K562 (cell line): ENCODE measurements at regions of chr4 and their contacts with region 1.

Region 1: DNA sequence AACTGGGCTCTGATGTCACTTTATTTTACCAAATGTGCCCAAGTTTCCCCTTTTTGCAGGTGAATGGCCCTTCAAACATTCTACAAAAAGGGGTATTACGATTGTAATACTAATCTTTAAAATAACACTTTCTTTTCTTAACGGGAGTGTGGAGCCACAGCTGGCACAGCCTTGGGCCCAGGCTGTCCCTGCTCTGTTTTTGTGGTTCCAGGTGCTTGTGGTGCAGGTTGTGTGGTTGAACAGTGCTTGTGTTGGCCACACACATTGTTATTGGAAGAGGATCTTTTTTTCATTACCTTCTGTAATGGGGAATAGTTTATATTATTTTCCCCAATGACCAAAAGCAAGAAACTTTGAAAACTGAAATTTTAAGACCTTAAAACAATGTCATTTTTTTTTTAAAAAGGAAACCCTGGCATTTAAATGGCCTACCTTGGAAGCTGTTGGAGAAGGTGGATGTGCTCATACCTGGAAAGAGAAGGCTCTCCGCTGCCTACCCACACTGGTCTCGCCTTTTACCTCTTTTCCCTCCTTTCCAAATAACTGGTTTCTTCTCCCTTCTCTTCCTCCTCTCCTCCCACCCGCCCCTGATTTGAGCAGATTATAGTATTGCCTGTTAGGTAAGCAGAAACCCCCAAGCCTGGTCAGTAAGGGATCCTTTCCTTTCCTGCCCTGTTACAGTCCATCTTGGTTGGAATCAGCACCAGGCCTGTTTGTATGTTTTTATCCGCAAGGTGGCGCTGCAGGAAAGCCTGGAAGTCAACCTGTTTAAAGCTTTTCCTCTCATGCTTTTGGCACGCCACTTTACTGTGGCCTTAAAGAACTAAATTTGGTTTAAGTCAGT is 28.6 kb downstream of the HADH start:
- DNase-seq: peak; percentile 71 to 85 (median 80)
- ATAC-seq: peak; percentile 97
- H3K4me3 ChIP-seq: no peak overlapping the region
- H3K27ac ChIP-seq: no peak overlapping the region
- H3K4me1 ChIP-seq: peaks cover 0 to 4% of the 10 kb centered on the region in 2 experiments; a peak in 3 of 5 replicates
- H3K27me3 ChIP-seq: no peaks in the 10 kb centered on the region
- CTCF ChIP-seq: peak; percentile 82 to 85 (median 84)
- EP300 ChIP-seq: no peak
- POLR2A ChIP-seq: no peak
- RAD21 ChIP-seq: peak; percentile 72 to 82

Region 2: GRCh38 chr4:107606700-107607099 is 411.6 kb before region 1 on chr4:
- CTCF ChIA-PET with region 1: no interaction called
- POLR2A ChIA-PET with region 1: no interaction called
- in situ Hi-C with region 1: no loop called
- intact Hi-C with region 1: no loop called
- DNase-seq: no peak
- ATAC-seq: no peak
- H3K4me3 ChIP-seq: no peak overlapping the region
- H3K27ac ChIP-seq: no peak overlapping the region
- H3K4me1 ChIP-seq: no peaks in the 10 kb centered on the region
- H3K27me3 ChIP-seq: no peaks in the 10 kb centered on the region
- CTCF ChIP-seq: no peak
- EP300 ChIP-seq: no peak
- POLR2A ChIP-seq: no peak
- RAD21 ChIP-seq: no peak

Region 3: GRCh38 chr4:107922486-107923483 is 95.5 kb before region 1 on chr4:
- CTCF ChIA-PET with region 1: no interaction called
- POLR2A ChIA-PET with region 1: no interaction called
- in situ Hi-C with region 1: no loop called
- intact Hi-C with region 1: no loop called
- DNase-seq: no peak
- ATAC-seq: no peak
- H3K4me3 ChIP-seq: no peak overlapping the region
- H3K27ac ChIP-seq: no peak overlapping the region
- H3K4me1 ChIP-seq: no peaks in the 10 kb centered on the region
- H3K27me3 ChIP-seq: no peaks in the 10 kb centered on the region; a peak in 1 of 5 replicates
- CTCF ChIP-seq: no peak
- EP300 ChIP-seq: no peak
- POLR2A ChIP-seq: no peak
- RAD21 ChIP-seq: no peak

Region 4: GRCh38 chr4:108109997-108110416 is 91.7 kb after region 1 on chr4:
- CTCF ChIA-PET with region 1: no interaction called
- POLR2A ChIA-PET with region 1: no interaction called
- in situ Hi-C with region 1: no loop called
- intact Hi-C with region 1: no loop called
- DNase-seq: no peak
- ATAC-seq: no peak
- H3K4me3 ChIP-seq: no peak overlapping the region
- H3K27ac ChIP-seq: no peak overlapping the region
- H3K4me1 ChIP-seq: peaks cover 4 to 44% of the 10 kb centered on the region in 2 experiments; a peak in 4 of 5 replicates
- H3K27me3 ChIP-seq: no peaks in the 10 kb centered on the region
- CTCF ChIP-seq: no peak
- EP300 ChIP-seq: no peak
- POLR2A ChIP-seq: no peak
- RAD21 ChIP-seq: no peak

Region 5: GRCh38 chr4:108181704-108182103 is 163.4 kb after region 1 on chr4:
- CTCF ChIA-PET with region 1: no interaction called
- POLR2A ChIA-PET with region 1: no interaction called
- in situ Hi-C with region 1: no loop called
- intact Hi-C with region 1: loop called (anchors 5 kb)
- DNase-seq: peak; percentile 31 to 52 (median 36)
- ATAC-seq: peak; percentile 98
- H3K4me3 ChIP-seq: no peak overlapping the region
- H3K27ac ChIP-seq: no peak overlapping the region
- H3K4me1 ChIP-seq: no peaks in the 10 kb centered on the region
- H3K27me3 ChIP-seq: no peaks in the 10 kb centered on the region
- CTCF ChIP-seq: peak; percentile 44 to 76 (median 64); a peak in 4 of 6 replicates
- EP300 ChIP-seq: no peak
- POLR2A ChIP-seq: no peak
- RAD21 ChIP-seq: peak; percentile 25 to 60; a peak in 3 of 4 replicates

Region 6: GRCh38 chr4:108512615-108513505 is 494.6 kb after region 1 on chr4:
- CTCF ChIA-PET with region 1: no interaction called
- POLR2A ChIA-PET with region 1: no interaction called
- in situ Hi-C with region 1: no loop called
- intact Hi-C with region 1: loop called (anchors 2 kb)
- DNase-seq: peak; percentile 26 to 74 (median 40)
- ATAC-seq: peak; percentile 93
- H3K4me3 ChIP-seq: no peak overlapping the region
- H3K27ac ChIP-seq: no peak overlapping the region
- H3K4me1 ChIP-seq: no peaks in the 10 kb centered on the region; a peak in 1 of 5 replicates
- H3K27me3 ChIP-seq: peaks cover 0 to 18% of the 10 kb centered on the region in 2 experiments; a peak in 4 of 5 replicates
- CTCF ChIP-seq: peak; percentile 55 to 59 (median 58); a peak in 5 of 6 replicates
- EP300 ChIP-seq: no peak
- POLR2A ChIP-seq: no peak
- RAD21 ChIP-seq: peak; percentile 66 to 73